CD4-positive, alpha-beta T cell (primary cell): ENCODE measurements at regions of chr19 and their contacts with region 1.

Region 1: DNA sequence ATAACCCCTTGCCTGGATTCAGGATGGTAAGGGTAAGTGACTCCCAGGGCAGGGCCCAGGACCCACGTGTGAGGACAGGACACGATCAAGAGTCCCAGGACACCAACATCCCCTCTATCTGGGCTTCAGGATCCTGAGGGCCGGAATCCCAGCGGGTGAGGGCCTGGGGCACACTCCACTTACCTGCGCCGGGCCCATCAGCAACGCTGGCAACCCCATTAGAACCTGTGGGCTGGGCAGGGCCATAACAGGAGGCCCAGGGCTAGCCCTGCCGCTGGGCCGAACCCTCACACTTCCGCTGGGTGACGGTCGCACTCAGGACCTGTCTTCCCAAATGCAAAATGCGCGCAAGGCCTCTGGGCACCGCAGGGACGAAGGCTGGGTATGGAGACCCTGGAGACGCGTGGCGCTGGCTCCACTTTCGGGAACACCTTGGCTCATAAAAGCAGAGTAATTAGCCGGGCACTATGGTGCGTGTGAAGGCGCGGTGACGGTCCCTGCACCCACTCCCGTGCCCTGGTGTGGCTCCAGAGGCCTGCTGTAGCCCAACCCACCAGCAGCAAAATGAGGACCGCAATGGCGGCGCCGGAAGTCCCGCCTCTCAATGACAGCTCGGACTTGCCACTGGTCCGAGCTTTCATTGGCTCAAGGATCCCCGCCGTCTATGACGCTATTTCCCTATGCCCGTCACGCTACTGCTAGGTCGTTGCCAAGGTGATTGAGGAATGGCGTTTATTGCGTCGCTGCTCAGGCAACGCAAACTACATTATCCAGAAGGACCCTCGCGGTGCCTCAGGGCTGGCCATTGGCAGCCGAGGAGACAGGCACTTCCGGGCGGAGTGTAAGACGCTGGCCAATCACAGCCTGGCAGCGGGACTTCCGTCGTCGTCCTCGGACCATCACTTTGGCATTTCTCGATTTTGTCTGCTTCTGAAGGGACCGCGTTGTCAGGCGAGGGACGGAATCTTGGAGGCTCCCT is at the start of gene ZNF132:
- DNase-seq: peak; percentile 84 to 100 (median 92)
- ATAC-seq: peak; percentile 96
- H3K4me3 ChIP-seq: peak within 1 kb of the TSS; percentile 62
- H3K4me3 Mint-ChIP-seq: peak within 1 kb of the TSS; percentile 97
- H3K27ac ChIP-seq: peak within 1 kb of the TSS; percentile 68 to 77
- H3K27ac Mint-ChIP-seq: peak within 1 kb of the TSS; percentile 88
- H3K4me1 ChIP-seq: peaks cover 23% of the 10 kb centered on the region
- H3K4me1 Mint-ChIP-seq: peaks cover 27% of the 10 kb centered on the region
- H3K27me3 ChIP-seq: no peaks in the 10 kb centered on the region
- H3K27me3 Mint-ChIP-seq: peaks cover 11% of the 10 kb centered on the region
- CTCF ChIP-seq: no peak
- total RNA-seq, gene ZNF132: 1.0 to 1.4 TPM

Region 2: GRCh38 chr19:58284199-58284598 is 155.7 kb before region 1 on chr19:
- CTCF ChIA-PET with region 1: no interaction called
- POLR2A ChIA-PET with region 1: no interaction called
- intact Hi-C with region 1: no loop called
- DNase-seq: no peak
- ATAC-seq: no peak
- H3K4me3 ChIP-seq: no peak overlapping the region
- H3K4me3 Mint-ChIP-seq: no peak overlapping the region
- H3K27ac ChIP-seq: no peak overlapping the region
- H3K27ac Mint-ChIP-seq: no peak overlapping the region
- H3K4me1 ChIP-seq: peaks cover 13% of the 10 kb centered on the region
- H3K4me1 Mint-ChIP-seq: peaks cover 29% of the 10 kb centered on the region
- H3K27me3 ChIP-seq: no peaks in the 10 kb centered on the region
- H3K27me3 Mint-ChIP-seq: no peaks in the 10 kb centered on the region
- CTCF ChIP-seq: no peak

Region 3: DNA sequence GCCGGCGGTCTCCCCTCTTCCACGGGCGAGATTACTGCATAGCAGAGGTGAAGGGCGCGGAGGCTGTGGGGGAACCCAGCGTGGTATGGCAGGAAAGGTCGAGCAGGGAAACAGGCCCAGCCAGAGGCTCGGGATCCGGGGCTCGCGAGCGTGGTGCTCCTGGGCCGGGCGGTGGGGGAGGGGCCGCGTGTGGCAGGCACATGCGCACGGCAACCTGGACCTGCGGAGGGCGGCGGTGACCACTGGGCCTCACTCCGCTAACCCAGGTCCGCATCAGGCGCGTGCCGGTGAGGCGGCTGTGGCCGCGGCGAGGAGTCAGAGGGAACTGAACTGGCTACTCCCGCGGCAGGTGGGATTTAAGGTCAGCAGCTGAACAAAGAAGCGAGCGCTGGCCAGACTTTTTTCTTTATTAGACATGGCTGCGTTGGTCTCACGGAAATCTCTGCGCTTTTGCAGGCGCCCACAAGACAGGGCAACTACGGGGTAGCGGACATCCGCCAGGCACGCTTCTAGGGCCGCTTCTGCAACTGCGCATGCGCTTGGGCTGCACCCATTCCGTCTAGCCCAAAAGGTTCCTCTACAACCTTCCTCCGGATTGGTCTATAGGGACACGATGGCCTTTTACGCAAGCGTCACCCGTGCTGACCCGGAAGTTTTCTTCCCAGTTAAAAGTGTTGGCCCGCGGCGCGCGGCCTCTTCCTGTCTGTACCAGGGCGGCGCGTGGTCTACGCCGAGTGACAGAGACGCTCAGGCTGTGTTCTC is 53.1 kb before region 1 on chr19 and contains the start of gene RPS5:
- CTCF ChIA-PET with region 1: no interaction called
- POLR2A ChIA-PET with region 1: interaction called, 3 read pairs
- intact Hi-C with region 1: loop called (anchors 1 to 2 kb)
- DNase-seq: peak; percentile 90 to 100 (median 95)
- ATAC-seq: peak; percentile 90
- H3K4me3 ChIP-seq: peak within 1 kb of the TSS; percentile 79
- H3K4me3 Mint-ChIP-seq: peak within 1 kb of the TSS; percentile 99
- H3K27ac ChIP-seq: peak within 1 kb of the TSS; percentile 93 to 97
- H3K27ac Mint-ChIP-seq: peak within 1 kb of the TSS; percentile 98
- H3K4me1 ChIP-seq: peaks cover 53% of the 10 kb centered on the region
- H3K4me1 Mint-ChIP-seq: peaks cover 47% of the 10 kb centered on the region
- H3K27me3 ChIP-seq: no peaks in the 10 kb centered on the region
- H3K27me3 Mint-ChIP-seq: no peaks in the 10 kb centered on the region
- CTCF ChIP-seq: no peak
- total RNA-seq, gene RPS5: 1,619 to 1,646 TPM

Region 4: GRCh38 chr19:58451358-58452101 is 11.7 kb after region 1 on chr19 and contains the start of gene ZNF324B:
- CTCF ChIA-PET with region 1: interaction called, 3 read pairs
- POLR2A ChIA-PET with region 1: interaction called, 24 read pairs
- intact Hi-C with region 1: loop called (anchors 1 kb)
- DNase-seq: peak; percentile 92 to 98 (median 96)
- ATAC-seq: peak; percentile 97
- H3K4me3 ChIP-seq: peak within 1 kb of the TSS; percentile 66
- H3K4me3 Mint-ChIP-seq: peak within 1 kb of the TSS; percentile 85
- H3K27ac ChIP-seq: peak within 1 kb of the TSS in 1 of 2 donors; percentile 61
- H3K27ac Mint-ChIP-seq: peak within 1 kb of the TSS; percentile 63
- H3K4me1 ChIP-seq: peaks cover 15% of the 10 kb centered on the region
- H3K4me1 Mint-ChIP-seq: peaks cover 21% of the 10 kb centered on the region
- H3K27me3 ChIP-seq: peaks cover 9 to 16% of the 10 kb centered on the region in 2 experiments
- H3K27me3 Mint-ChIP-seq: peaks cover 28% of the 10 kb centered on the region
- CTCF ChIP-seq: no peak
- total RNA-seq, gene ZNF324B: 6.3 to 7.6 TPM

Region 5: GRCh38 chr19:58475714-58476497 is 36.0 kb after region 1 on chr19 and contains the start of gene ZNF446:
- CTCF ChIA-PET with region 1: no interaction called
- POLR2A ChIA-PET with region 1: interaction called, 3 read pairs
- intact Hi-C with region 1: loop called (anchors 1 to 5 kb)
- DNase-seq: peak; percentile 90 to 99 (median 94)
- ATAC-seq: peak; percentile 82
- H3K4me3 ChIP-seq: peak within 1 kb of the TSS; percentile 87
- H3K4me3 Mint-ChIP-seq: peak within 1 kb of the TSS; percentile 90
- H3K27ac ChIP-seq: peak within 1 kb of the TSS; percentile 76 to 95
- H3K27ac Mint-ChIP-seq: peak within 1 kb of the TSS; percentile 95
- H3K4me1 ChIP-seq: peaks cover 22% of the 10 kb centered on the region
- H3K4me1 Mint-ChIP-seq: peaks cover 23% of the 10 kb centered on the region
- H3K27me3 ChIP-seq: no peaks in the 10 kb centered on the region
- H3K27me3 Mint-ChIP-seq: no peaks in the 10 kb centered on the region
- CTCF ChIP-seq: no peak
- total RNA-seq, gene ZNF446: 13.6 to 14.6 TPM